Mucosa of descending colon (tissue), 3 donors: ENCODE measurements at regions of chr16 and their contacts with region 1.

Region 1: DNA sequence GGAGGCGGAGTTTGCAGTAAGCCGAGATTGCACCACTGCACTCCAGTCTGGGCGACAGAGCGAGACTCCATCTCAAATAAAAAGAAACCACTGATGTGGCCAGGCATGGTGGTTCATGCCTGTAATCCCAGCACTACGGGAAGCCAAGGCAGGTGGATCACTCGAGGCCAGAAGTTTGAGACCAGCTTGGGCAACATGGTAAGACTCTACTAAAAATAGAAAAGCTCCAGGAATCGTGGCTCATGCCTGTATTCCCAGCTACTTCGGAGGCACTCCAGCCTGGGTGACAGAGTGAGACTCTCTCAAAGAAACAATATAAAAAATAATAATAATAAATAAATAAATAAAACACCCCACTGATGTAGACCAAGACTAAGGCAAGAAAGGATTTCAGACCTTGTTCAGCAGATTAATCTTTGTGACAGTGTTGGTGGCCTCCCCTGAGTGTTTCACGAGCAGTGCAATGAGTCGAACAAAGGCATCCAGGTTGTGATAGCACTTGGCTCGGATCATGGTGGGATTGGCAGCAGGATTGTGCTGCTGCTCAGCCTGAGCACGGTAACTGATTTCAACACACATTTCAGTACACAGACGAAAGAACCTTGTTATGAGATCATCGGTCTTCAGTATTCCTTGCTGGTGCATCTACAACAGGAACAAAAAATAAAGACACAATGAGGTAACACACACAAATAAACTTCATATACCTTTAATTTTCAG is 18.6 kb downstream of the SETD6 start:
- DNase-seq: no peak
- ATAC-seq: no peak
- H3K4me3 ChIP-seq: no peak overlapping the region
- H3K4me1 ChIP-seq: no peaks in the 10 kb centered on the region
- CTCF ChIP-seq: no peak

Region 2: GRCh38 chr16:58582971-58583765 is 49.3 kb after region 1 on chr16:
- intact Hi-C with region 1: loop called in 1 of 2 experiments (anchors 10 kb)
- DNase-seq: no peak
- ATAC-seq: no peak
- H3K4me3 ChIP-seq: no peak overlapping the region
- H3K4me1 ChIP-seq: no peaks in the 10 kb centered on the region
- CTCF ChIP-seq: no peak